WTC11 (cell line): ENCODE measurements at regions of chr9 and their contacts with region 1.

Region 1: DNA sequence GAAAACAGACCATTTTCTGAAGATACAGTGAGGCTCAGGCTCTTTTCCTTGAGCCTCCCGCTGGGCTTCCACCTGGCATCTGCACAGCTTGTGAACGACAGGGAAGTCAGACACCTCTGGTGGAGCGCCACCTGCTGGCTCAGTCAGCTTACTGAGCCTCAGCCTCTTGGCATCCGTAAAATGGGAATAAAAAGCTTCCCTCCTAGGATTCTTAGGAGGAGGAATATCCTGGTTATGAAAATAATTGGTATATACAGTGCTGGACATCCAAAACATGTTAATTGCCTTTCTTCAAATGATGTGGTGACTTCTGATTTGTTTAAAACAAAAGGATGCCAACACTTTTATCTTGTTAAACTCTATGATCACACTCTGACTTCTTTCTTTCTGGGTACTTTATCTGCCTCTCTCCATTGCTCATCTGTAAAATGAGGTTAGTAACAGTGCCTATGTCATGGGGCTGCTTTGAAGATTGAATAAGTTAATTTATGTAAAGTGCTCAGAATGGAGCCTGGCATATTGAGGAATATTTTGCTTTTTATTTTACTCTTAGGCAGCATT is 67.5 kb downstream of the MAMDC2 start:
- DNase-seq: peak; percentile 90
- ATAC-seq: peak; percentile 65
- H3K4me3 Mint-ChIP-seq: no peak overlapping the region
- H3K27ac Mint-ChIP-seq: no peak overlapping the region
- H3K4me1 Mint-ChIP-seq: peaks cover 44% of the 10 kb centered on the region
- H3K27me3 Mint-ChIP-seq: no peaks in the 10 kb centered on the region
- CTCF ChIP-seq: peak; percentile 89

Region 2: DNA sequence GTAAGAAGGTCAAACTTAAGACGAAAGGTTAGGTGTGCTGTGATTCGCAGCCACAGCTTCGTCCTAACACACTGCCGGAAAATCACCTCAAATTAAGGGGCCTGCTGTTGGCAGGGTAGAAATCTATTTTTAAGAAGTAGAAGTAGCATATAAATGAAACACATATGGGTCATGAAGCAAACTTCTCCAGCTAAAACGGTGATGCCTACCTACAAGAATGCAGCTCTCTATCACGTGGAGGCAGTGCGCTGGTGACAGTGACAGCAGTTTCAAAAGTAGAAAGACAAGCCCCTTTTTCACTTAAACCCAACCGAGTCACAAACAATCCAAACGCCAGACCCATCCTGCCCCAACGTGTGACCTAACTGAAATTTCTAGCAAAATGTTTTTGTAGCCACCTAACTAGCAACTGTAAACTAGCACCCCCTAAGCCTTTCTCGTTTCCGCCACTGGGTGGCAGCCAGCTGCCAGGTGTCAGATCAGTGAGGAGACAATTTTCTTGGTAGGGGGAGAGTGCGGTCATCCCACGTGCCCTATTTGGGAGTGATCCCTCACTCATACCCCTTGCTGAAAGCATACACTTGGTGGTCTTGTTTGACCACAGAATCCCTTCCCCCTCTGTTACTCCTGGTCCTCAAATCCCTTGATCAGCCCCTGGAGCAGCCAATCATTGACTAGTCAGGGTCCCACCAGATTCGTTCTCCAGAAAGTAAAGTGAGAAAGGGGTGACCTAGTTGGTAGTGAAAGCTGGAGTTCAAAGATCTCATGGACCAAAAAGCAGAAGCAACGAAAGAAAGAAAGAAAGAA is 139.3 kb before region 1 on chr9:
- CTCF ChIA-PET with region 1: interaction called, 220 read pairs
- POLR2A ChIA-PET with region 1: no interaction called
- DNase-seq: peak; percentile 83
- ATAC-seq: peak; percentile 94
- H3K4me3 Mint-ChIP-seq: no peak overlapping the region
- H3K27ac Mint-ChIP-seq: no peak overlapping the region
- H3K4me1 Mint-ChIP-seq: peaks cover 23% of the 10 kb centered on the region
- H3K27me3 Mint-ChIP-seq: peaks cover 4% of the 10 kb centered on the region; the same call in 1 of the 2 replicates
- CTCF ChIP-seq: peak; percentile 75

Region 3: DNA sequence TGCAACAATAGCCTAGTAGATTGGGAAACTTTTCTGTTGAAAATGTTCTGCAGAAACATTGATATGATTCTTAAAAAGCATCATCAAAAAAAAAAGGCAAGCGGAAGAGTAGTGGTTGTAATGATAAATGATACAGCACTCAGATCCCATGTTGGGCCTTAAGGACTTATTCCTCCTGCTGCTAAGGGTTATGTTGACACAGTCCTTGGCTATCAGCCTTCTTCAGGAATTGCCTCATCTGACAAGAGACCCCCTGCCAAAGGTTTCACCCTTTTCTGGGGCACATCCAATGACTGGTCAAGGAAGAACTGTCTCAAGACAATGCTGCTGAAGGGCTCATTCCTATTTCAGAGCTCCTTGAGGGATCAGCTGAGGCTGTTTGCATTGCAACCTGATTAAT is 111.8 kb before region 1 on chr9:
- CTCF ChIA-PET with region 1: interaction called, 24 read pairs
- POLR2A ChIA-PET with region 1: no interaction called
- DNase-seq: no peak
- ATAC-seq: no peak
- H3K4me3 Mint-ChIP-seq: no peak overlapping the region
- H3K27ac Mint-ChIP-seq: no peak overlapping the region
- H3K4me1 Mint-ChIP-seq: peaks cover 24% of the 10 kb centered on the region
- H3K27me3 Mint-ChIP-seq: no peaks in the 10 kb centered on the region
- CTCF ChIP-seq: no peak

Region 4: GRCh38 chr9:70043689-70044489 is 67.2 kb before region 1 on chr9 and contains the start of gene MAMDC2:
- CTCF ChIA-PET with region 1: interaction called, 28 read pairs
- POLR2A ChIA-PET with region 1: interaction called, 3 read pairs
- DNase-seq: peak; percentile 70
- ATAC-seq: peak; percentile 66
- H3K4me3 Mint-ChIP-seq: peak within 1 kb of the TSS; percentile 83
- H3K27ac Mint-ChIP-seq: peak within 1 kb of the TSS; percentile 66
- H3K4me1 Mint-ChIP-seq: peaks cover 48% of the 10 kb centered on the region
- H3K27me3 Mint-ChIP-seq: peaks cover 33% of the 10 kb centered on the region
- CTCF ChIP-seq: no peak
- total RNA-seq, gene MAMDC2: 6.0 to 6.3 TPM (median 6.3 TPM) in 3 replicates

Region 5: DNA sequence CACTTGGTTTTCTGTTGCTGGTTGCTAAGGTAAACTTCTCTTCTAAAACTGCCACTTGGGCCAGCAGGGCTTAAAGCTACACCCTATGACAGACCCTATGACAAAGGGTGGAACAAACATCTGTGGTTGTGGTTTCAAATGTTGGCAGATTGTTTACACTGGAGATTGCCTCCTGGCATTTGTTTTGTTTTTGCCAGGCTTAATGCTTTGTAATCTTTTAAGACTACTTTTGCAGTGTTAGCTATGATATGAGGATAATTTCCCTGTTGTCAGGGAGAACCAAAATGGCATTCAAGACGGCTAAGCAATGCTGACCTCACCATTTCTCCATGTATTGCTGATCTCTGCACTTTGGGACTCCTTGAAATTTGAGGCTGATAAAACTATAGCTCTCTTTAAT is 17.2 kb before region 1 on chr9:
- CTCF ChIA-PET with region 1: interaction called, 10 read pairs
- POLR2A ChIA-PET with region 1: interaction called, 3 read pairs
- DNase-seq: no peak
- ATAC-seq: no peak
- H3K4me3 Mint-ChIP-seq: no peak overlapping the region
- H3K27ac Mint-ChIP-seq: no peak overlapping the region
- H3K4me1 Mint-ChIP-seq: no peaks in the 10 kb centered on the region
- H3K27me3 Mint-ChIP-seq: no peaks in the 10 kb centered on the region
- CTCF ChIP-seq: no peak

Region 6: GRCh38 chr9:70160686-70161600 is 49.8 kb after region 1 on chr9:
- CTCF ChIA-PET with region 1: interaction called, 24 read pairs
- POLR2A ChIA-PET with region 1: no interaction called
- DNase-seq: no peak
- ATAC-seq: no peak
- H3K4me3 Mint-ChIP-seq: no peak overlapping the region
- H3K27ac Mint-ChIP-seq: peak overlapping the region; percentile 7
- H3K4me1 Mint-ChIP-seq: peaks cover 21% of the 10 kb centered on the region; the same call in 1 of the 2 replicates
- H3K27me3 Mint-ChIP-seq: no peaks in the 10 kb centered on the region
- CTCF ChIP-seq: no peak

Region 7: DNA sequence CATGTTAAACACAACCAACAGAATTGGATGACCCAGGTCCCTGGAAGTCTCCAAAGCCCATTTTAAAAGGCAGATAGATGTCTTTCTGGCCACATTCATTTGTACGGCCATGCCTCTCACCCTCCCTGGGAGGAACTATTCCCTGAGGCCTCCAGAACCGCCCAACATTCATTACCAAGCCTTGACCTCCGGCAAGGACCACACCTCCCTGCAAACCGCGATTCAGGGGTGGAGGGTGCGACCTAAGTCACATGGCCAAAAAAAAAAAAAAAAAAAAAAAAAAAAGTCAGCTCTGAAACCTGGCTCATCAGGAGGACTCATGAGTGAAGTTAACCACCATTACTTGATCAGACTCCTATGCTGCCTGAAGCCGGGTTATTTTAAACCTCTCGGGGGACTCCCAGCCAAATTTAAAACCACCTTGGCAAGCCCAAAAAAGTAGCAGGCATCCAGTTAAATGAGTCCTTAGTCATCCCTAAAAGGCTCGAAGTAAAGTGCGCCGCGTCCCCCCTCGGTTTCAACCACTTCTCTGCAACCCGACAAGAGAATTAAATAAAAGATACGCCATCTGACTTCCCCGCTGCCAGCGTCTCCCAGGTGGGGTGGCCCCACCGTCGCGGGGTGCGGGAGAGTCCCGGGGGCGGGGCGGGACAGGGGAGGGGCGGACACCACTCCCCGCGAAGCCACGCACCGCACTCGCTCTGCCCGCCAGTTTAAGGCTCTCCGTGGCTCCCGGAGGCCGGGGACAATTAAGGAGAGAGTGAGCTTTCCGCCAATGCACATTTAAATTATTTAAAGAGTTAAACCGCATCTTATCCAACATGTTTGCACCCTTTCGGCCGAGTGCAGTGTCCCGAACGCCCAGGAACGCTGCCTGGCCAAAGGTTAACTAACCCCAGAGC is 301.1 kb after region 1 on chr9:
- CTCF ChIA-PET with region 1: no interaction called
- POLR2A ChIA-PET with region 1: no interaction called
- DNase-seq: peak; percentile 39
- ATAC-seq: peak; percentile 40
- H3K4me3 Mint-ChIP-seq: peak overlapping the region; percentile 87
- H3K27ac Mint-ChIP-seq: no peak overlapping the region
- H3K4me1 Mint-ChIP-seq: peaks cover 41% of the 10 kb centered on the region
- H3K27me3 Mint-ChIP-seq: peaks cover 59% of the 10 kb centered on the region
- CTCF ChIP-seq: no peak

Region 8: DNA sequence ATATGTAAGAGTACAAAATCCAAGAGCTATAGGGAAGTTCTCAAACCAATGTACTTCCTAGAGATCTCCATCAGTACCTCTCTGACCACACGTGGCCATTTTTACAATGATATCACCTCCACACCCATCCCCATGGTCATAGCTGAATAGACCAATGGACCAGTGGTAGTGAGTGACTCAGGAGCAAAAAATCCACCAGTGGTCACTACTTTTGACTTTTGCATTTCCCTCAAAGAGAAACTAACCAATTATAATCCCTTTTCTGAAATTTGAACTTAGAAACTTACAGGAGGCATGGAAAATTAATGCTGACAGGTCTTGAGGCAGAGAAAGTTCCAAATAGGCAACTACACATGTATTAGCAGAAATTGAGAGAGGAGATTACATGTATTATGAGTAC is 771.9 kb after region 1 on chr9:
- CTCF ChIA-PET with region 1: no interaction called
- POLR2A ChIA-PET with region 1: no interaction called
- DNase-seq: no peak
- ATAC-seq: no peak
- H3K4me3 Mint-ChIP-seq: no peak overlapping the region
- H3K27ac Mint-ChIP-seq: no peak overlapping the region
- H3K4me1 Mint-ChIP-seq: peaks cover 31% of the 10 kb centered on the region
- H3K27me3 Mint-ChIP-seq: no peaks in the 10 kb centered on the region
- CTCF ChIP-seq: no peak